ENCODE measurements at regions of chr20 and their contacts with region 1.

Region 1: DNA sequence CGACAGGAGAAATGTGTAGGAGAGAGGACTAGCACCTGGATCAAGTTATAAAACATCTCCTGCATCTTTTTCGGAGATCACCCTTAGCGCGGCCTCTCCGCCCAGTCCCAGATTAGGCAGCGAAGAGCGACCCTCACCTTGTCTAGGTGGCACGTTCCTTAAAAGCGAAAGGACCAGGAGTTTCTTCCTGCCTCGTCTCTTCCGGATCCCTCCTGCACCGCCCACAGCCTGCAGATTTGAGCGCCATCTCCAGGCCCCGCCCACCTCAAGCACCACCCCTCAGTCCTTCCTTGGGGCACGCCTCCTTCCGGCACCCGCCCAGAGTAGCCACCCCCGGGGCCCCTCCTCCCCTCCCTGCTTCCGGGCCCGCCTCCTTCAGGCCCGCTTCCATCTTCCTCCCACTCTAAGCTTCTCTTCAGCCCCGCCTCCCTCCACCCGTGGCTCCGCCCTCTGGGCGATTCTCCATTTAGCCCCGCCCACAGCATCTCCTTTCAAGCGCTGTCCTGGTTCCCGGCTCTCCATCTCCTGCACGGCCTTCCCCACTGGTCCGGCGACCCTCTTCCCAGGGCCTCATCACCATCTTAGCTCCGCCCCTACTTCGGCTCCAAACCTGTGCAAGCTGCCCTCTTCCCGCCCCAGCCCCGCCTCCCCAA is 662 bp upstream of the RALY start:
- DNase-seq: peak; percentile 100
- ATAC-seq: peak; percentile 87
- H3K4me3 Mint-ChIP-seq: peak overlapping the region; percentile 97
- H3K27ac Mint-ChIP-seq: peak overlapping the region; percentile 97
- H3K4me1 Mint-ChIP-seq: peaks cover 50% of the 10 kb centered on the region
- H3K27me3 Mint-ChIP-seq: no peaks in the 10 kb centered on the region

Region 2: GRCh38 chr20:33401184-33401920 is 591.7 kb before region 1 on chr20 and contains the start of gene CDK5RAP1:
- CTCF ChIA-PET with region 1: no interaction called
- POLR2A ChIA-PET with region 1: no interaction called
- intact Hi-C with region 1: loop called in 1 of 2 experiments (anchors 5 kb)
- DNase-seq: peak; percentile 92
- ATAC-seq: peak; percentile 98
- H3K4me3 Mint-ChIP-seq: peak within 1 kb of the TSS; percentile 79
- H3K27ac Mint-ChIP-seq: peak within 1 kb of the TSS; percentile 90
- H3K4me1 Mint-ChIP-seq: peaks cover 42% of the 10 kb centered on the region
- H3K27me3 Mint-ChIP-seq: no peaks in the 10 kb centered on the region
- total RNA-seq, gene CDK5RAP1: 31.3 to 41.5 TPM

Region 3: GRCh38 chr20:33686100-33686983 is 306.7 kb before region 1 on chr20 and contains the start of gene E2F1:
- CTCF ChIA-PET with region 1: no interaction called
- POLR2A ChIA-PET with region 1: interaction called, 4 read pairs
- intact Hi-C with region 1: loop called in 1 of 2 experiments (anchors 1 kb)
- DNase-seq: peak; percentile 98
- ATAC-seq: peak; percentile 84
- H3K4me3 Mint-ChIP-seq: peak within 1 kb of the TSS; percentile 95
- H3K27ac Mint-ChIP-seq: peak within 1 kb of the TSS; percentile 83
- H3K4me1 Mint-ChIP-seq: peaks cover 73% of the 10 kb centered on the region
- H3K27me3 Mint-ChIP-seq: no peaks in the 10 kb centered on the region
- total RNA-seq, gene E2F1: 45.9 to 50.9 TPM

Region 4: GRCh38 chr20:33966885-33967525 is 26.0 kb before region 1 on chr20:
- CTCF ChIA-PET with region 1: no interaction called
- POLR2A ChIA-PET with region 1: no interaction called
- intact Hi-C with region 1: no loop called
- DNase-seq: no peak
- ATAC-seq: no peak
- H3K4me3 Mint-ChIP-seq: no peak overlapping the region
- H3K27ac Mint-ChIP-seq: no peak overlapping the region
- H3K4me1 Mint-ChIP-seq: peaks cover 3% of the 10 kb centered on the region
- H3K27me3 Mint-ChIP-seq: peaks cover 2% of the 10 kb centered on the region

Region 5: DNA sequence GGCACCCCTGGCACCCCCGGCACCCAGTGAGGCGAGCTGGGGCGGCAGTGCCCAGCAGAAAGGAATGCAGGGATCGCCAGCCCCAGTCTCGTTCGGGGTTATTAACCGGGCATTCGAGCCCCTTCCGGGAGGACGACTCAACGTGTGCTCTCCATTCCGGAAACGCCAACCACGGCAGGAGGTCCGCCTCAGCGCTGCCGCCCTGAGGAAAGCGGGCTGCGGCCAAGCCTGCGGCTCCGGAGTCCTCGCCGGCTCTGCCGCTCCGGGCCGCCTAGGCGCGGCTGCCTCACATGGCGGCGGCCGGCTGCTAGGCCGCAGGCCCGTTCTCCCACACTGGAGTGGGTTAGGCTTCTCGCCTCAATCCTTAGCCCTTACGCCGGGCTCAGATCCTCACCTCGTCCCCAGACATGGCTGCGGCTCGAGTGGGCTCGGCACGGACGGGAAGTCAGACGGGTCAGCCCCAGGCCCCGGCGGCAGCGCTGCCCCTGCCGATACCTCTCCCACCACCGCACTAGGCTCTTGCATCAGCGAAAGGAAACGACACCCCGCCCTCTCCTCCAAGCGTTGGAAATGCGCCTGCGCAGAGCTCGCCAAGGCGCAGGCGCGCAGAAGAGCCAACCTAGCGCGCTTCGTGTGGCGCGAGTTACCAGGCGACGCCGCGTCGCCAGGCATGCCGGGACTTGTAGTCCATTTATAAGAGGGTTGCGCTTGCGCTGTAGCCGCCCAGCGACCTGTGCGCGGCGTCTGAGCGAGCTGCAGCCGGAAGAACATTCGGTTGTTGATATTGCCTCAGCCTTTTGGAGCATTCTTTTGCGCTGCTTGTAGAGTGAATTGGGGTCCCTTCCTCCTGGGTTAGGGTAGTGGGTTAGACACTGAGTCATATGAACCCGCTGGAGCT is 118.9 kb after region 1 on chr20 and contains the start of gene EIF2S2:
- CTCF ChIA-PET with region 1: interaction called, 3 read pairs
- POLR2A ChIA-PET with region 1: interaction called, 15 read pairs
- intact Hi-C with region 1: loop called (anchors 1 kb)
- DNase-seq: peak; percentile 97
- ATAC-seq: peak; percentile 88
- H3K4me3 Mint-ChIP-seq: peak within 1 kb of the TSS; percentile 86
- H3K27ac Mint-ChIP-seq: peak within 1 kb of the TSS; percentile 97
- H3K4me1 Mint-ChIP-seq: peaks cover 38% of the 10 kb centered on the region
- H3K27me3 Mint-ChIP-seq: no peaks in the 10 kb centered on the region
- total RNA-seq, gene EIF2S2: 179 to 187 TPM

Region 6: GRCh38 chr20:34876162-34877001 is 883.3 kb after region 1 on chr20 and contains the start of gene ACSS2:
- CTCF ChIA-PET with region 1: no interaction called
- POLR2A ChIA-PET with region 1: no interaction called
- intact Hi-C with region 1: loop called in 1 of 2 experiments (anchors 1 kb)
- DNase-seq: peak; percentile 99
- ATAC-seq: peak; percentile 86
- H3K4me3 Mint-ChIP-seq: peak within 1 kb of the TSS; percentile 90
- H3K27ac Mint-ChIP-seq: peak within 1 kb of the TSS; percentile 85
- H3K4me1 Mint-ChIP-seq: peaks cover 54% of the 10 kb centered on the region
- H3K27me3 Mint-ChIP-seq: no peaks in the 10 kb centered on the region
- total RNA-seq, gene ACSS2: 29.9 to 35.1 TPM

Region 7: GRCh38 chr20:35771689-35772562 is 1778.9 kb after region 1 on chr20 and contains the start of gene PHF20:
- CTCF ChIA-PET with region 1: no interaction called
- POLR2A ChIA-PET with region 1: no interaction called
- intact Hi-C with region 1: loop called in 1 of 2 experiments (anchors 2 kb)
- DNase-seq: peak; percentile 100
- ATAC-seq: peak; percentile 91
- H3K4me3 Mint-ChIP-seq: peak within 1 kb of the TSS; percentile 81
- H3K27ac Mint-ChIP-seq: peak within 1 kb of the TSS; percentile 94
- H3K4me1 Mint-ChIP-seq: peaks cover 76% of the 10 kb centered on the region
- H3K27me3 Mint-ChIP-seq: no peaks in the 10 kb centered on the region
- total RNA-seq, gene PHF20: 54.3 to 61.6 TPM